Heart left ventricle (tissue), 16 donors: ENCODE measurements at regions of chr17 and their contacts with region 1.

Region 1: GRCh38 chr17:72725433-72726068 is 366.9 kb downstream of the SLC39A11 start:
- DNase-seq: peak in 3 of 5 donors; percentile 39 to 52 (median 40)
- ATAC-seq: peak; percentile 51 to 82 (median 76)
- H3K4me3 ChIP-seq: no peak overlapping the region
- H3K27ac ChIP-seq: no peak overlapping the region
- H3K4me1 ChIP-seq: peaks cover 0 to 16% (median 0%) of the 10 kb centered on the region in 12 donors
- H3K27me3 ChIP-seq: no peaks in the 10 kb centered on the region
- CTCF ChIP-seq: peak; percentile 61 to 91 (median 81)
- POLR2A ChIP-seq: no peak

Region 2: DNA sequence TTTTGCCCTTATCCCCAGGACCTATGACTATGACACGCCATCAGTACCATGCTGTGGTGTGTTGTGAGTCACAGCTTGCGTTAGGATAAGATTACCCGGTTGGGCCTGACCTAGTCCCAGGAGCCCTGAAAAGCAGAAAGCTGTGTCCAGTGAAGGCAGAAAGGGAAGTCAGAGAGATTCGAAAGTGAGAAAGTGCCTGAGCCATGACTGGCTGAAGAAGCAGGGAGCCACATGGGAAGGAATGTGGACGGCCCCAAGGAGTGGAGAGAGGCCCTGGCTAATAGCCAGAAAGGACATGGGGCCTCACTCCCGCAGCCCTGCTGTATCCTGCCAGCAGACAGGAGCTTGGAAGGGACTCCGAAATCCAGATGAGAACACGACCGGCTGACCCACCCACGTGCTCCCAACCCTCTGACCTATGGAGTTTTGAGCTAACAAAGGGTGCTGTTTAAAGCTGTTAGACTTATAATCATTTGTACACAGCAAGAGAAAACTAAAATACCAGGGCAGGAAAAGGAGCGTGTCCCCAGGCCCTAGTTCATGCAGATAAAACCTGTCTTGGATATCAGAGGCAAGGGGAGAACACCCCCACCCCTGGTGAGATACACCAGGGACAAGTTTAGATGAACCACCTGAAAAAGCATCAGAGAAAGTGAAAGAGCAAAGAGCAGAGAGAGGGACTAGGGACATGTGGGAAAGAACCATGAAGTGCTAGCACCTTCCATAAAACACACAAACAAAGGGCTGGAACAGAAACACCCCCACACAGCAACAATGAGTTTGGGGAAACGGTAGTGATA is 251.6 kb after region 1 on chr17:
- intact Hi-C with region 1: loop called in 2 of 10 experiments (anchors 10 kb)
- DNase-seq: peak; percentile 49 to 69 (median 61)
- ATAC-seq: peak; percentile 71 to 92 (median 88)
- H3K4me3 ChIP-seq: peak overlapping the region in 2 of 12 donors; percentile 0 to 32
- H3K27ac ChIP-seq: peak overlapping the region in 9 of 12 donors; percentile 20 to 81 (median 41)
- H3K4me1 ChIP-seq: peaks cover 0 to 30% (median 18%) of the 10 kb centered on the region in 12 donors
- H3K27me3 ChIP-seq: no peaks in the 10 kb centered on the region
- CTCF ChIP-seq: no peak
- POLR2A ChIP-seq: no peak

Region 3: DNA sequence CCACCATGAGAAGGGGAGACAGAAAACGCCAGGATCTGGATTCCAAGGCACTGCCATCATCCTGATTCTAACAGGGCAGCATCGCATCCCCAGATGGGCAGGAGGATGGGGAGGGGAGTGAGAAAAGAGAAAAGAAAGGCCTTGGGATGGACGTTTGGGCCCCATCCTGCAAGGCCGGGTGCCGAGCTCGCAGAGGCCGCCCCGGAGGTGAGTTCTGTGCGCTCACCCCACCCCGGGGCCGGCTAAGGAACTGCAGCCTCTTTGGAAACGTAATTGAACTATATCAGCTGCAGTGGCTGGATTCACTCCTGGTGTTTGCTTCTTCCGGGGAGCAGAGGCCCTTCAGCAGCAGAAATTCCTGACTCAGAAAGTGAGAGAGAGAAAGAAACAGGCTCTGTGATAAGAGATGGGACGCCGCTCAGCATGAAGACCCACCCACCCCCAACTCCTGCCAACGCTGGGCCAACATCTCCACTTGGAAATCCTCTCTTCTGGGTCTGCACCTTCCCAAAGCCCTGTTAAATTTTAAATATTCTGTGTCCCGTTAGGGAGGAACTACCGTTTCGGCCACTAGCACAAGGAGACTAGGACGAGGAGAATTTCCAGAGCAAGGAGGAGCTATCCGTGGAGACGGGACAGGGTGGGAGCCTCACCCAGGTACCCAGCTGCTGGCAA is 430.8 kb after region 1 on chr17:
- intact Hi-C with region 1: loop called in 9 of 10 experiments (anchors 2 to 10 kb)
- DNase-seq: peak; percentile 63 to 83 (median 67)
- ATAC-seq: peak; percentile 60 to 98 (median 94)
- H3K4me3 ChIP-seq: no peak overlapping the region
- H3K27ac ChIP-seq: no peak overlapping the region
- H3K4me1 ChIP-seq: peaks cover 0 to 13% (median 0%) of the 10 kb centered on the region in 12 donors
- H3K27me3 ChIP-seq: peaks cover 0 to 29% (median 6%) of the 10 kb centered on the region in 9 donors
- CTCF ChIP-seq: peak; percentile 64 to 87 (median 77)
- POLR2A ChIP-seq: no peak

Region 4: GRCh38 chr17:73231841-73232586 is 506.5 kb after region 1 on chr17:
- intact Hi-C with region 1: loop called in 1 of 10 experiments (anchors 5 kb)
- DNase-seq: peak; percentile 97 to 98 (median 97)
- ATAC-seq: peak; percentile 93 to 97 (median 96)
- H3K4me3 ChIP-seq: peak overlapping the region; percentile 56 to 100 (median 88)
- H3K27ac ChIP-seq: peak overlapping the region; percentile 61 to 96 (median 89)
- H3K4me1 ChIP-seq: peaks cover 5 to 58% (median 45%) of the 10 kb centered on the region in 12 donors
- H3K27me3 ChIP-seq: no peaks in the 10 kb centered on the region
- CTCF ChIP-seq: peak in 10 of 12 donors; percentile 13 to 64 (median 47)
- POLR2A ChIP-seq: peak in 1 of 2 donors; percentile 82

Region 5: DNA sequence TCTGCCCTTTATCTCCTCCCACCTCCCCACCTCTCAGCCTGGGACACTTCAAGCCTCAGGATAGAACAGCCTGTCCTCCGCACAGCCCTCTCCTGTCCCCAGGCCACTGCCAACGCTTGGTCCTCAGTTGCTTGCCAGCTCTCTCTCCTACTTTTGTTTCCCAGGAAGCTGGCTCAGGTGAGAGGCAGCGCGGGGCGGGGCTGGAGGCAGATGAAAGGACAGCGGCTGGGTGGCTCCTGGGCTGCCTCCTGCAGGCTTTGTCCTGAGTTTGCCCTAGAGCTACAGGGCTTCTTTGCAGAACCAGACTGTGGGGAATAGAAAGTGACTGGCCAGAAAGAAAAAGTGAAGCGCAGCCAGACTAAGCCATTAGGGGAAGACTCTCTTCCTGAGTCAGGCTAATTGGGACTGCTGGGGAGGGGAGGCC is 634.4 kb after region 1 on chr17:
- intact Hi-C with region 1: loop called in 2 of 10 experiments (anchors 5 to 10 kb)
- DNase-seq: peak in 2 of 5 donors; percentile 66 to 72
- ATAC-seq: peak; percentile 38 to 74 (median 72)
- H3K4me3 ChIP-seq: no peak overlapping the region
- H3K27ac ChIP-seq: peak overlapping the region in 2 of 12 donors; percentile 24 to 28
- H3K4me1 ChIP-seq: peaks cover 0 to 43% (median 9%) of the 10 kb centered on the region in 12 donors
- H3K27me3 ChIP-seq: no peaks in the 10 kb centered on the region
- CTCF ChIP-seq: no peak
- POLR2A ChIP-seq: no peak

Region 6: GRCh38 chr17:73371285-73371684 is 645.7 kb after region 1 on chr17:
- intact Hi-C with region 1: loop called in 5 of 10 experiments (anchors 5 to 10 kb)
- DNase-seq: no peak
- ATAC-seq: no peak
- H3K4me3 ChIP-seq: no peak overlapping the region
- H3K27ac ChIP-seq: no peak overlapping the region
- H3K4me1 ChIP-seq: peaks cover 0 to 17% (median 6%) of the 10 kb centered on the region in 12 donors
- H3K27me3 ChIP-seq: no peaks in the 10 kb centered on the region
- CTCF ChIP-seq: no peak
- POLR2A ChIP-seq: no peak